GM18951 (cell line): ENCODE measurements at regions of chr20 and their contacts with region 1.

Region 1: DNA sequence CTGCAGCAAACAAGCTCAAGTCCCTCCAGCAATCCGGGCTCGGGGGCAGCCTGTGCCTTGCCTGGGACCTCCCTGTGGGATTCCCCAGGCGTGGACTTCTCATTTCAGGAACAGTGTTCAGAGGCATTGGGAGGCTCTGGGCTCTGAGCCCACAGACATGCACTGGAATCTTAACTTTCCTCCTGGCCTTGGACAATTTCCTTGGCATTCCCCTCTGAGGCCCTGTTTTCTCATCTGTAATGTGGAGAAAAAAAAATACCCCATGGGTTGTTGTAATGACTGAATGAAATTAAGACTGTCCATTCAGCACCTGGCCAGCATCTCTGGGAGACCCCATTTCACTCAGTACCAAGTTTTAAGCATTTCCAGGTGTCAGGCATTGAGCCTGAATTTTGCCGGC is 17.6 kb downstream of the BPIFB4 start:
- POLR2A ChIP-seq: no peak

Region 2: DNA sequence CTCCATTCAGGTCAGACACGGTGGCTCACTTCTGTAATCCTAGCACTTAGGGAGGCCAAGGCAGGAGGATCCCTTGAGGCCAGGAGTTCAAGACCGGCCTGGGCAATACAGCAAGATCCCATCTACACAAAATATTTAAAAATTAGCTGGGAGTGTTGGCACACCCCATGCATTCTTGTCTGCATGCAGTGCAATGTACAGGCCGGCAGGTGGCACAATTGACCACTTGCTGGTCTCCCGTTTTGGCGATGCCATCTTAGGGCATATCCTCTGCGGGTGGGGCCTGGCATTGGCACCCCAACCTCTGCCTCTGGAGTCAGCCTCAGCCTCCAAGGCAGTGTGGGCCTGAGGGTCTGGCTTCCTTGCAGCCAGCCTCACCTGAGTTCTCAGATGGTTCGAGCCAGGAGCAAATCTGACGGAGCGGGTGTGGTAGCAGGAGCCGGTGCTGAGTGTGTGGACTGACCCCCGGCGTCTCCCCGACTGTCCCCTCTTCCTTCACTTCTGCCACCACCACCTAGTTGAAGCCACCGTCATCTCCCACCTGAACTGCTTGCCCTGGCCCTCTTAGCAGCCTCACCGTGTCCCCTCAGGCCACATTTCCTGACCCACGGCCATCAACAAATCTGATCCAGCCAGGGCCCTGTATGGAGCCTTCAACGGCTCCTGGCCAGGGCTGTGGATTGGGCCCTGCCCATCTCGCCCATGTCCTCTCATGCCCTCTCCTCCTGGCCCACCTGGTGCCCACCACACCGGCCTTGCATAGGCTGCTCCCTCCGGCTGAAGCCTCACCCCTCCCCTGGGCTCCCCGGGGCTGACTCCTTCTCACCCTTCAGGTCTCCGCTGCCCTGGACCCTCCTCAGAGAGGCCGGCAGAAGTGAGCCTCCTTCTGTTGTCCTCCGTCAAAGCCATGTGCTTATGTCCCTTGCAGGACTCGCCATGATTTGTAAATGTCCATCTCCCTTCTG is 194.3 kb before region 1 on chr20:
- in situ Hi-C with region 1: loop called (anchors 10 kb)
- POLR2A ChIP-seq: no peak

Region 3: DNA sequence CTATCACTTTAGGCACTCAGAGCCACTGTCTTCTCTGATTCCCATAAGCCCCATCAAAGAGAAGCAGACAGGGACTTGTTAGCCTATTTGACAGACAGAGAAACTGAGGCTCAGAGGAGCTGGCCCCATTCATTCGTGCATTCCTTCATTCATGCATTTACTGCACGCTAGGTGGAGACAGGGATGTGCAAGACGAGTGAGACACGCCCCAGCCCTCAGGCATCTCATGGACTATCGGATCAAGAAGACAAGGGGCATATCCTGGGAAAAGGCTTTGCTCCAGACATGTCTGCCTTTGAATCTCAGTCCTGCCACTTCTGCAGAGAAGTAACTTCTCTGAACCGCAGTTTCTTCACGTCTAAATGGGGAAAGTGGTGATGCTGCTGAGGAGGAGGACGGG is 240.1 kb after region 1 on chr20:
- in situ Hi-C with region 1: no loop called
- POLR2A ChIP-seq: no peak